ENCODE measurements at regions of chr1 and their contacts with region 1.

Region 1: GRCh38 chr1:39653546-39654031 is 14.1 kb upstream of the HEYL start:
- DNase-seq: peak; percentile 59 to 85 (median 68)
- ATAC-seq: peak; percentile 88
- H3K4me3 ChIP-seq: no peak overlapping the region
- H3K4me3 Mint-ChIP-seq: no peak overlapping the region
- H3K27ac ChIP-seq: no peak overlapping the region
- H3K27ac Mint-ChIP-seq: no peak overlapping the region
- H3K4me1 ChIP-seq: peaks cover 11% of the 10 kb centered on the region
- H3K4me1 Mint-ChIP-seq: peaks cover 7% of the 10 kb centered on the region
- H3K27me3 ChIP-seq: peaks cover 3 to 7% of the 10 kb centered on the region in 2 experiments
- H3K27me3 Mint-ChIP-seq: peaks cover 13% of the 10 kb centered on the region
- CTCF ChIP-seq: peak; percentile 98

Region 2: GRCh38 chr1:39720094-39720999 is 66.8 kb after region 1 on chr1:
- CTCF ChIA-PET with region 1: interaction called, 20 read pairs
- POLR2A ChIA-PET with region 1: no interaction called
- intact Hi-C with region 1: loop called (anchors 1 kb)
- DNase-seq: peak in 3 of 14 experiments; percentile 80 to 83 (median 81)
- ATAC-seq: peak; percentile 90
- H3K4me3 ChIP-seq: no peak overlapping the region
- H3K4me3 Mint-ChIP-seq: no peak overlapping the region
- H3K27ac ChIP-seq: no peak overlapping the region
- H3K27ac Mint-ChIP-seq: no peak overlapping the region
- H3K4me1 ChIP-seq: no peaks in the 10 kb centered on the region
- H3K4me1 Mint-ChIP-seq: no peaks in the 10 kb centered on the region
- H3K27me3 ChIP-seq: peaks cover 9 to 15% of the 10 kb centered on the region in 2 experiments
- H3K27me3 Mint-ChIP-seq: peaks cover 46% of the 10 kb centered on the region
- CTCF ChIP-seq: peak; percentile 78

Measured in CD4-positive, alpha-beta T cell (primary cell).